ENCODE measurements at regions of chr1 and their contacts with region 1.

Region 1: DNA sequence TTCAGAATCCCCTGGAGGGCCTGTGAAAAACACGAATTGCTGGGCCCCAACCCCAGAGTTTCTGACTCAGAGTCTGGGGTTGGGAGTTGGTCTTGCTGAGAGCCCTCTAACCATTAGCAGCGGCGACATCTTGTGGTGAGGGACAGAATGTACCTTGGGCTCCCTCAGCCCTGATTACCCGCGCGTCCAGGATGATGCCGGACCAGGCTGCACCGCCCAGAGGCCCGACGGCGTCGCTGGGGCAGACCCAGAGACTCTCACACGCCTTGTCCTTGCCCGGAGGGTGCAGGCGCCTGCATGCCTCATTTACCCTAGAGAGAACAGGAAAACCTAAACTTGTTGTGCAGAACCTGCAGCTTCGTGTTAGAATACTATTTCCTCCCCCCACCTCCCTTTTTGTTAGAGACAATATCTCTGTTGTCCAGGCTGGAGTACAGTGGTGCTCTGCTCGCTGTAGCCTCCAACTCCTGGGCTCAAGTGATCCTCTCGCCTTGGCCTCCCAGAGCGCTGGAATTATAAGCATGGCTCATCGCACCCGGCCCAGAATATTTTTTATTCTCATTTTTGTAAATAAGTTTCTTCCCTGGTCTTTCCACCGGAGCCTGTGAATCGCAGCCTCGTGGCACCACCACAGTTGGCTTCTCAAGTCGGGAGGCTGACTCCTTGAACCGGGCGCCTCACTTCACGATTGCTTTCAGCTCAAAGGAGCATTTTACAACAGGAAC is 22.2 kb upstream of the RD3 start:
- DNase-seq: peak; percentile 70 to 77 (median 73)
- H3K4me3 ChIP-seq: peak overlapping the region in 1 of 3 experiments; percentile 16
- H3K4me3 Mint-ChIP-seq: peak overlapping the region; percentile 71 to 89
- H3K27ac ChIP-seq: no peak overlapping the region
- H3K27ac Mint-ChIP-seq: peak overlapping the region in 2 of 7 donors; percentile 63 to 78
- H3K4me1 ChIP-seq: peaks cover 17 to 27% of the 10 kb centered on the region in 2 donors
- H3K4me1 Mint-ChIP-seq: peaks cover 28% of the 10 kb centered on the region
- H3K27me3 ChIP-seq: peaks cover 0 to 13% of the 10 kb centered on the region in 2 donors
- H3K27me3 Mint-ChIP-seq: peaks cover 15 to 23% (median 20%) of the 10 kb centered on the region in 3 donors
- CTCF ChIP-seq: peak; percentile 78

Region 2: DNA sequence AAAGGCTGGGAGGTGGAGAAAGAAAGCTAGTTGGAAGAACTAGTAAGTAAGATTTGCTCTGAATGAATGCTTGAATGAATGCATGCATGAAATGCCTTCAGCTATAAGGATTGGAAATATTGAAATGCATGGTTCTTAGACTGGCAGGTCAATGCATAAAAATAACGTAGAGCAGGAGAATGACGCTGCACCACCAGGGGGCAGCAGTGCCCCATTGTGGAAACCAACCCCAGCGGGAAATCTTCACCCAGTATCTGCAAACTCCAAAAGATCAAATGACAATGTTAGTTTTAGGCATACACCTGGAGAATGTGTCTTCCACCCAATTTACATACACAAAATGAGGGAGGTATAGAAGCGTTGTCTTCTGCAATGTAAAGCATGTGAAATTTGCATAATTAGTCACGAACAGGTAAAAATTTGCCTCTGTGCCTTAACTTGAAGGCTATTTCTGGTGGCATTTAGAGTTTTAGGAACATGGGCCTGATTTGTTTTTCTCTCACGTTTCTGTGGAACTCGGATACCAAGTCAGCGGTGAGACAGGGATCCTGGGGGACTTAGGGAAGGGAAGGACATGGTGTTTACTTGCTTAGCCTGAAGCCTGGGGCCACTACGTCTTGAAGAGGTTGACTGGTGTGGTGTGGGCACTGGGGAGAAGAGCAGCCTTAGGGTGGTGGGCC is 1106.8 kb before region 1 on chr1:
- intact Hi-C with region 1: loop called in 1 of 2 experiments (anchors 5 kb)
- DNase-seq: peak; percentile 24 to 36 (median 34)
- H3K4me3 ChIP-seq: no peak overlapping the region
- H3K4me3 Mint-ChIP-seq: no peak overlapping the region
- H3K27ac ChIP-seq: no peak overlapping the region
- H3K27ac Mint-ChIP-seq: no peak overlapping the region
- H3K4me1 ChIP-seq: no peaks in the 10 kb centered on the region
- H3K4me1 Mint-ChIP-seq: no peaks in the 10 kb centered on the region
- H3K27me3 ChIP-seq: no peaks in the 10 kb centered on the region
- H3K27me3 Mint-ChIP-seq: peaks cover 0 to 4% (median 0%) of the 10 kb centered on the region in 3 donors
- CTCF ChIP-seq: peak; percentile 94

Region 3: GRCh38 chr1:211296396-211296795 is 217.8 kb before region 1 on chr1:
- intact Hi-C with region 1: no loop called
- DNase-seq: no peak
- H3K4me3 ChIP-seq: no peak overlapping the region
- H3K4me3 Mint-ChIP-seq: no peak overlapping the region
- H3K27ac ChIP-seq: no peak overlapping the region
- H3K27ac Mint-ChIP-seq: no peak overlapping the region
- H3K4me1 ChIP-seq: no peaks in the 10 kb centered on the region
- H3K4me1 Mint-ChIP-seq: no peaks in the 10 kb centered on the region
- H3K27me3 ChIP-seq: no peaks in the 10 kb centered on the region
- H3K27me3 Mint-ChIP-seq: no peaks in the 10 kb centered on the region
- CTCF ChIP-seq: no peak

Region 4: GRCh38 chr1:211527006-211527405 is 12.8 kb after region 1 on chr1:
- intact Hi-C with region 1: no loop called
- DNase-seq: no peak
- H3K4me3 ChIP-seq: no peak overlapping the region
- H3K4me3 Mint-ChIP-seq: no peak overlapping the region
- H3K27ac ChIP-seq: no peak overlapping the region
- H3K27ac Mint-ChIP-seq: peak overlapping the region in 1 of 7 donors; percentile 79
- H3K4me1 ChIP-seq: peaks cover 3 to 6% of the 10 kb centered on the region in 2 donors
- H3K4me1 Mint-ChIP-seq: peaks cover 14% of the 10 kb centered on the region
- H3K27me3 ChIP-seq: no peaks in the 10 kb centered on the region
- H3K27me3 Mint-ChIP-seq: peaks cover 0 to 2% (median 2%) of the 10 kb centered on the region in 3 donors
- CTCF ChIP-seq: no peak

Region 5: DNA sequence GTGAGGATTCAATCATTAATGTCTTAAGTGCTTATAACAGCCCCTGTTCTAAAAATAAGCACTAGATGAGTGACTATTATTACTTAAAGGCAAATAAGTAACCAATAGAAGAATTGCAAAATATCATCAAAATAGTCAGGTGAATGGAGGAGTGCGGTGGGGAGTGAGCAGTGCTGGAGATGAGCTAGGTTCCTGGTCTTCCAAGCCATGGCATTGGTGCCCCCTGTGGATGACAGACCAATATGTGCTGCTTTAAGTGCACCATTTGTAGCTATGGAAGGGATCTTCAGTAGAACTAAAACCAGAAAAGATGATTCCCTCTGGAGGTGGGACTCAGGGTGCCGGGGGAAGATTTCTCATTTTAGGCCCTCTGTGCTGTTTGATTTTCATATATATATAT is 110.8 kb after region 1 on chr1:
- intact Hi-C with region 1: loop called in 1 of 2 experiments (anchors 10 kb)
- DNase-seq: peak; percentile 69 to 80 (median 79)
- H3K4me3 ChIP-seq: no peak overlapping the region
- H3K4me3 Mint-ChIP-seq: no peak overlapping the region
- H3K27ac ChIP-seq: no peak overlapping the region
- H3K27ac Mint-ChIP-seq: peak overlapping the region in 1 of 7 donors; percentile 49
- H3K4me1 ChIP-seq: no peaks in the 10 kb centered on the region
- H3K4me1 Mint-ChIP-seq: peaks cover 3% of the 10 kb centered on the region
- H3K27me3 ChIP-seq: no peaks in the 10 kb centered on the region
- H3K27me3 Mint-ChIP-seq: peaks cover 2 to 12% (median 7%) of the 10 kb centered on the region in 3 donors
- CTCF ChIP-seq: peak; percentile 72

Region 6: GRCh38 chr1:211654838-211655787 is 140.9 kb after region 1 on chr1:
- intact Hi-C with region 1: loop called in 1 of 2 experiments (anchors 5 kb)
- DNase-seq: peak; percentile 67 to 77 (median 74)
- H3K4me3 ChIP-seq: no peak overlapping the region
- H3K4me3 Mint-ChIP-seq: no peak overlapping the region
- H3K27ac ChIP-seq: no peak overlapping the region
- H3K27ac Mint-ChIP-seq: no peak overlapping the region
- H3K4me1 ChIP-seq: peaks cover 0 to 9% of the 10 kb centered on the region in 2 donors
- H3K4me1 Mint-ChIP-seq: peaks cover 16% of the 10 kb centered on the region
- H3K27me3 ChIP-seq: no peaks in the 10 kb centered on the region
- H3K27me3 Mint-ChIP-seq: peaks cover 0 to 5% (median 2%) of the 10 kb centered on the region in 3 donors
- CTCF ChIP-seq: peak; percentile 94

Measured in CD14-positive monocyte (primary cell).